Activated CD4-positive, alpha-beta memory T cell treated with anti-CD3 and anti-CD28 coated beads for 36 hours (primary cell): ENCODE measurements at regions of chr6 and their contacts with region 1.

Region 1: GRCh38 chr6:152184917-152185574 is 377.6 kb downstream of the ESR1 start:
- DNase-seq: peak; percentile 39
- H3K4me3 Mint-ChIP-seq: peak overlapping the region; percentile 78
- H3K27ac Mint-ChIP-seq: peak overlapping the region; percentile 94
- H3K4me1 Mint-ChIP-seq: peaks cover 73% of the 10 kb centered on the region
- H3K27me3 Mint-ChIP-seq: no peaks in the 10 kb centered on the region

Region 2: DNA sequence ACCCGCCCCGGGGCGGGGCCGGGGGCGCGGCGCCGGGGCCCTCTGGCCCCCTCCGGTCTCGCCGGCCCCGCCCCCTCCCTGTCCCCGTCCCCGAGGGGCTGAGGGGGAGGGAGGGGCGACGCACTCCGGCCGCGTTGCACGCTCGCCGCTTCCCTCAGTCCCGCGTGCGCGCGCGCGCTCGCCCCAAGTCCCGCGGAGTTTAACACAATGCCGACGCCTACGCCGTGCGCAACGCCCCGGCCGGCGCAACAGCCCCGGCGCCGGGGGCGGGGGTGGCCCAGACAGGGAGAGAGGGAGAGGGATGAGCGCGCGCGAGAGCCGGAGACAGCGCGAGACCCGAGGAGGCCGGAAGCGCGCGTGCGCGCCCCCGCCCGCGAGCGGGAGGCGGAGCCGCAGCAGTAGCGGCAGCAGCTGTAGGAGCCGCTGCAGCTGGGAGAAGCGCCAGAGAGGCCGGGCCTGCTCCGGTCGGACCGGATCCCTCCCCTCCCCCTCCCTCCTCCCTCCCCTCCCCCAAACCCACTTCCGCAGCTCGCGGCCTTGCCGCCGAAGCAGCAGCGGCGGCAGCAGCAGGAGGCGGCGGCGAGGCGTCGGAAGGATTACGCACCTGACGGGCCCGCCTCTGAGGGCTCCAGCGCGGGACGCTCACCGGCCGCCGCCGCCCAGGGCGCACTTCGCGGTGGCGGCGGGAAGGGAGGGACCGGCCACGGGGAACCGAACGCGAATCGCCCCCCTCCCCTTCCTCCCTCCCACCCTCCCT is 794.6 kb before region 1 on chr6:
- CTCF ChIA-PET with region 1: no interaction called
- POLR2A ChIA-PET with region 1: no interaction called
- intact Hi-C with region 1: loop called (anchors 5 kb)
- DNase-seq: peak; percentile 99
- H3K4me3 Mint-ChIP-seq: peak overlapping the region; percentile 98
- H3K27ac Mint-ChIP-seq: peak overlapping the region; percentile 72
- H3K4me1 Mint-ChIP-seq: peaks cover 63% of the 10 kb centered on the region
- H3K27me3 Mint-ChIP-seq: no peaks in the 10 kb centered on the region

Region 3: DNA sequence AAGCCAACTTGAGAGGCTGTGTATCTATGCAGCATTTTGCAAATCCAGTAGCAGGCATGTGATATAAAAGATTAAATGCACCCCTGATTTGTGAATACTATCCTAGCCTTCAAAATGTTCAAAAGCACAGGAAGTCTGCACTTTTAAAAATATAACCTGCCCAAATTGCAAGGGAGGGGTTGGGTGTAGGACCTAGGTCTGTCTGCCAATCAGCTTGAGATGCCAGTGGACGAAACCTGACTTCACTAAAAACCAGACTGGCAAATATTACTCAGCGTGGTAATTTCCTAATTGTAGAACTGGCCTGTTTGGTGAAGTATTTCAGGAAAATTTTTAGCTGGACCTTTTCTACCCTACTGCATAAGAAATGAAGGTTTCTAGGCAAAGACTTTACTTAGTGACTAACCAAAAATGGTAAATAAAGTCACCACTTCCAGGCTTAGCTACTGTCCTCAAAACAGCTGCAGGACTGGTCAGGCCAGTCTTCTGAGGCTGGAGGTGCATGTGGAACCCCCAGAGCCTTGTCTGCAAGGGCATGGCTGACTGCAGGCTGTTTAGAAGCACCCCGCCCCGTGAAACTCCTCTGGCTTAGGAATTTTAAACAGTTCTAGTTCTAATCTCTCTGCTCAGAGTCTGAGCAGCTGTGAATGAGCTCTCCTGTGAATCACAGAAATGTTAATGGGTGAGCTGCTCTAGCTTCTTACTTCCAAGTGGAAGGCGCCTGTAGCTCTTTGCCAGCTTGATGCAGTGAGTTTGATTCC is 482.0 kb before region 1 on chr6:
- CTCF ChIA-PET with region 1: no interaction called
- POLR2A ChIA-PET with region 1: interaction called, 3 read pairs
- intact Hi-C with region 1: loop called (anchors 1 kb)
- DNase-seq: no peak
- H3K4me3 Mint-ChIP-seq: no peak overlapping the region
- H3K27ac Mint-ChIP-seq: peak overlapping the region; percentile 56
- H3K4me1 Mint-ChIP-seq: peaks cover 44% of the 10 kb centered on the region
- H3K27me3 Mint-ChIP-seq: peaks cover 6% of the 10 kb centered on the region

Region 4: GRCh38 chr6:152160346-152160745 is 24.7 kb before region 1 on chr6:
- CTCF ChIA-PET with region 1: interaction called, 3 read pairs
- POLR2A ChIA-PET with region 1: interaction called, 4 read pairs
- intact Hi-C with region 1: loop called (anchors 1 kb)
- DNase-seq: peak; percentile 40
- H3K4me3 Mint-ChIP-seq: no peak overlapping the region
- H3K27ac Mint-ChIP-seq: no peak overlapping the region
- H3K4me1 Mint-ChIP-seq: peaks cover 30% of the 10 kb centered on the region
- H3K27me3 Mint-ChIP-seq: no peaks in the 10 kb centered on the region

Region 5: GRCh38 chr6:152301764-152302568 is 116.9 kb after region 1 on chr6:
- CTCF ChIA-PET with region 1: interaction called, 3 read pairs
- POLR2A ChIA-PET with region 1: no interaction called
- intact Hi-C with region 1: loop called (anchors 2 kb)
- DNase-seq: peak; percentile 94
- H3K4me3 Mint-ChIP-seq: peak overlapping the region; percentile 99
- H3K27ac Mint-ChIP-seq: peak overlapping the region; percentile 95
- H3K4me1 Mint-ChIP-seq: peaks cover 31% of the 10 kb centered on the region
- H3K27me3 Mint-ChIP-seq: no peaks in the 10 kb centered on the region

Region 6: DNA sequence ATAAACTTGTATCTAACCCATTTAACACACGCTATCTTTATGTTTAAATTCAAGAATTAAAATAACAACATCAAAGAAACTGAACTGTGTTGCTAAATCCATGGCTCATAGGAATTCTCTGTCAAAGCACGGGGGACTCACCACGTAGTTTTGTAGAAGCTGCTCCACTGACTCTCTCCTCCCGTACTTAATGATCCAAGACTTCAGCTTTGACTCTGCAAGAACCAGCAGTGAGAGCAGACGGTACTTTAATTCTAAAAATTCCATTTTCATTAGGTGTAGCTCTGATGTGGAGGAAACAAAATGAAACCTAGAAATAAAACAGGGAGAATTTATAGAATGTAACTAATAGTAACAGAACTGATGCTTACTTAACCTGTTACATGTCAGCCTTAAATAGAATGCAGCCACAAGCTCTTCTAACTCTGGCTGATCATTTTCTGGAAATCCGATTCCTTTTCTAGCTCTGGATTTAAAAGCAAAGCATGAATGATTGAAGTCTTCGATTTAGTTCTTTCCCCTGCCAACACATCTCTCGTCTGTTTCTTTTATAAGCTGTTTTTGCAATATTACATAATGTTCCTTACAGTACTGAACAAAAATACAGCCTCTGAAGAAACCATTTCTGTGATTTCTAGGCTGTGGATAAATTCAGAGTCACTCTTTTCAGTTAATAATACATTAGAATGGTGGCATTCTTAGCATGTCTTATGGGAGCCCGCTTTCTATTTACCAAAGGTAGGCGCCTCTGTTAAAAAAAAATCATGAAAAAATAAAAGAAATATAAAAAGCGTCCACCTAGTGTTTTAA is 286.6 kb after region 1 on chr6:
- CTCF ChIA-PET with region 1: no interaction called
- POLR2A ChIA-PET with region 1: no interaction called
- intact Hi-C with region 1: no loop called
- DNase-seq: no peak
- H3K4me3 Mint-ChIP-seq: no peak overlapping the region
- H3K27ac Mint-ChIP-seq: no peak overlapping the region
- H3K4me1 Mint-ChIP-seq: no peaks in the 10 kb centered on the region
- H3K27me3 Mint-ChIP-seq: peaks cover 7% of the 10 kb centered on the region

Region 7: DNA sequence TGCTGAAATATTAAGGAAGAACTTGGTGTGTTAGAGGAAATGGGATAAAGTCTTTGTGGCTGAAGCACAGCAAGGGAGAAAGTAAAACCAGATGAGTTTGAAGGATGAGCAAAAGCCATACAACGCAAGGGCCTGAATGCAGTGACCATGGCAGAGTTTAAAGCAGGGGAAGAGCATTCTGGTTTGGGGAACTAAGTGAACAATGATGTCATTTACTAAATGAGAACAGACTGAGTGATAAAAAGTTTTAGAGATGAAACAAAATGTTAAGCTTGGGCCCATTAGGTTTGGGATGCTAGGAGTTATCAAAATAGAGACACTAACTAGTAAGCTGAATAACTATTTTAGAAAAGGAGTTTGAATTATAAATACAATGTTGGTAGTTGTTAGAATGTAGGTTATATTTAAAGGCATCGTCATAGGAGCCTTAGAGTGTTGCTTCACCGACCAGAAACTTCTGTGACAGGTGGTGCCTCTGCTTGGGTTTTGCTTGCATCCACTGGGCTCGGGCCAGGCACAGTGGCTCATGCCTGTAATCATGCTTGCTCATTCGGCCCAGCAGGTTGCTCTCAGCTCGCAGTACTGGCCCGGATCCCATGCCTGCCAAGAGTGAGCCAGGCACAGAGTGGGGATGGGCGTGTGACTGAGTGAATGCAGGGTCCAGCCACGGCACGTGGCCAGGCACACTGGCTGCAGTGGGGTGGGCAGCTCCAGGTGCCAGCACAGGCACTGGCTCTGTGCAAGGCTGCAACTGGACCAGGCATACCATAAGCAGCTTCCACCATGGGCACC is 1816.6 kb after region 1 on chr6:
- CTCF ChIA-PET with region 1: no interaction called
- POLR2A ChIA-PET with region 1: no interaction called
- intact Hi-C with region 1: no loop called
- DNase-seq: no peak
- H3K4me3 Mint-ChIP-seq: no peak overlapping the region
- H3K27ac Mint-ChIP-seq: no peak overlapping the region
- H3K4me1 Mint-ChIP-seq: no peaks in the 10 kb centered on the region
- H3K27me3 Mint-ChIP-seq: peaks cover 4% of the 10 kb centered on the region